ENCODE measurements at regions of chr6 and their contacts with region 1.

Region 1: GRCh38 chr6:133487174-133487573 is 246.0 kb downstream of the EYA4 start:
- ATAC-seq: peak in 1 of 8 experiments; percentile 45
- H3K4me3 ChIP-seq: no peak overlapping the region
- H3K27ac ChIP-seq: no peak overlapping the region
- H3K4me1 ChIP-seq: no peaks in the 10 kb centered on the region

Region 2: DNA sequence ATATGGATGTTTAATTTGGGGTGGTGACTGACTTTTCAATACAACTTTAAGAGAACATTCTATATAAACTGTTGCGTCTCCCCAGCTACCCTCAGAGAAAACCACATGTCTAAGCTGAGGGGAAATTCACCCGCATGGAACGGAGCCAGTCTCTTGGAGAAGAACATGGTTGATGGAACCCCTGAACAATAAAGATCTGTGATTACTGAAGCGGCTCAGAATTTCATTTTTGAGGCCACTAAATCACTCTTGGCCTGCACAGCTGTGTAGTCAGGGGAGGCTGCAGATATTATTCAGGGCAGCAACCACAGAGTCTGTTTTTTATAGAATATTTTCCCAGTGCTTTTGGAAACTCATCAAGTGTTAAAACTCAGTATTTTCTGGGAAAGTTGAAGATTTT is 172.2 kb before region 1 on chr6:
- in situ Hi-C with region 1: loop called in 1 of 9 experiments (anchors 25 kb)
- ATAC-seq: no peak
- H3K4me3 ChIP-seq: no peak overlapping the region
- H3K27ac ChIP-seq: no peak overlapping the region
- H3K4me1 ChIP-seq: no peaks in the 10 kb centered on the region